Breast epithelium (tissue), 4 donors: ENCODE measurements at regions of chr17 and their contacts with region 1.

Region 1: DNA sequence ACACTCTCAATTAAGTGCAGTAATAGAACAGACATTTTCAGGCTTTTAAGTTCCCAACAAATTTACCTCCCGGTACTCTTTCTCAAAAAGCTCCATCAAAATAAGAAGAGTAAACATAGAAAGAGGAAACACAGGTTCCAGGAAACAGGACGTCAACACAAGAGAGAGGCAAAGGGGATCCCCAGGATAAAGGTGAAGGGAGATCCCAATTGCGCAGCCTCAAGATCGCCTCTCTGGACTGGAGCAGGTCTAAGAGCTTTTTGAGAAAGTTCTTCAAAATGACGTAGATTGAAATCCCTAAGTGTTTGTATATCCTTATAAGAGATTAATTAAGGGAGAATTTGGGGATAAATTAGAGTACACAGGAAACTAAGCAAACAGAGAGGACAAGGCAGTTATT is 3.9 kb upstream of the FXR2 start:
- DNase-seq: no peak
- H3K4me3 ChIP-seq: no peak overlapping the region
- H3K27ac ChIP-seq: no peak overlapping the region
- H3K4me1 ChIP-seq: peaks cover 0 to 2% of the 10 kb centered on the region in 2 donors
- H3K27me3 ChIP-seq: no peaks in the 10 kb centered on the region
- CTCF ChIP-seq: no peak
- POLR2A ChIP-seq: no peak

Region 2: GRCh38 chr17:7631398-7632380 is 13.1 kb after region 1 on chr17:
- intact Hi-C with region 1: loop called (anchors 1 kb)
- DNase-seq: no peak
- H3K4me3 ChIP-seq: no peak overlapping the region
- H3K27ac ChIP-seq: no peak overlapping the region
- H3K4me1 ChIP-seq: no peaks in the 10 kb centered on the region
- H3K27me3 ChIP-seq: no peaks in the 10 kb centered on the region
- CTCF ChIP-seq: no peak
- POLR2A ChIP-seq: no peak